K562 (cell line): ENCODE measurements at regions of chr4 and their contacts with region 1.

Region 1: DNA sequence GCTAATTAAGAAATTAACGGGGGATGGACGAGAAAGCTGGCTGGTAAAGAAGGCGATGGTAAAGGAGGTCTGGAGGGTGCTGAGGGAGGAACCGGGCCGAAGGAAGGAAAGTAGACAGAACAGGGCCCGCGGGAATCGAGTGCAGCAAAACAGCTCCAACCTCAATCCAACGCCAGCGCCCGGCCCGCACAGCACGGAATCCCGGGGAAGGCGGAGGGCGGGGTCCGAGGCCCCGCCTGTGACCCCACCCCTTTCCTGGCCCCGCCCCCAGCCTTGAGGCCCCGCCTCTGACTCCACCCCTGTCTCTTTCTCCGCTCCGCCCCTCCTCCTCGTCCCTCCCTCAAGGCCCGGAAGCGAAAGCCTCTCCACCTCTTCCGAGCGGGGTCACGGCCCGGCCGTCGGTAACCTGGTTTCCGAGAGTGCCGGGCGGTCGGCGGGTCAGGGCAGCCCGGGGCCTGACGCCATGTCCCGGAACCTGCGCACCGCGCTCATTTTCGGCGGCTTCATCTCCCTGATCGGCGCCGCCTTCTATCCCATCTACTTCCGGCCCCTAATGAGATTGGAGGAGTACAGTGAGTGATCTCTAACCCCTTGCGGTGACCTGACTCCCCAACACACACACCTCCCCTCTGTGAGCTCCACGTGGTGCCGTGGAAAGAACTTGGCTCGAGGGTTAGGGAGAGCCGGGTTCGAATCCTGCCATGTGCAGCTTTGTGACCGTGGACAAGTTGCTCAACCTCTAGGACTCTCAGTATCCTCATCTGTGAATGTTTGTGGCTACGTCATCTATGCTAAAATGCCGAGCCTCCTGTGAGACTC is at the start of gene SMIM20:
- DNase-seq: peak; percentile 92 to 96 (median 95)
- ATAC-seq: peak; percentile 97
- H3K4me3 ChIP-seq: peak within 1 kb of the TSS; percentile 47
- H3K27ac ChIP-seq: peak within 1 kb of the TSS; percentile 94
- H3K4me1 ChIP-seq: peaks cover 13 to 16% of the 10 kb centered on the region in 2 experiments; a peak in 4 of 5 replicates
- H3K27me3 ChIP-seq: peaks cover 22 to 23% of the 10 kb centered on the region in 2 experiments; a peak in 3 of 5 replicates
- CTCF ChIP-seq: no peak
- EP300 ChIP-seq: peak; percentile 7; the same call in 1 of the 2 replicates
- POLR2A ChIP-seq: peak; percentile 86
- RAD21 ChIP-seq: no peak
- polyA plus RNA-seq, gene SMIM20: 50.7 to 51.0 TPM

Region 2: GRCh38 chr4:25792200-25792791 is 121.8 kb before region 1 on chr4:
- CTCF ChIA-PET with region 1: no interaction called
- POLR2A ChIA-PET with region 1: no interaction called
- in situ Hi-C with region 1: no loop called
- intact Hi-C with region 1: no loop called
- DNase-seq: peak; percentile 30 to 61 (median 42)
- ATAC-seq: peak; percentile 91
- H3K4me3 ChIP-seq: no peak overlapping the region
- H3K27ac ChIP-seq: no peak overlapping the region
- H3K4me1 ChIP-seq: no peaks in the 10 kb centered on the region
- H3K27me3 ChIP-seq: no peaks in the 10 kb centered on the region
- CTCF ChIP-seq: peak; percentile 67 to 75 (median 72)
- EP300 ChIP-seq: no peak
- POLR2A ChIP-seq: no peak
- RAD21 ChIP-seq: peak; percentile 33 to 46

Region 3: DNA sequence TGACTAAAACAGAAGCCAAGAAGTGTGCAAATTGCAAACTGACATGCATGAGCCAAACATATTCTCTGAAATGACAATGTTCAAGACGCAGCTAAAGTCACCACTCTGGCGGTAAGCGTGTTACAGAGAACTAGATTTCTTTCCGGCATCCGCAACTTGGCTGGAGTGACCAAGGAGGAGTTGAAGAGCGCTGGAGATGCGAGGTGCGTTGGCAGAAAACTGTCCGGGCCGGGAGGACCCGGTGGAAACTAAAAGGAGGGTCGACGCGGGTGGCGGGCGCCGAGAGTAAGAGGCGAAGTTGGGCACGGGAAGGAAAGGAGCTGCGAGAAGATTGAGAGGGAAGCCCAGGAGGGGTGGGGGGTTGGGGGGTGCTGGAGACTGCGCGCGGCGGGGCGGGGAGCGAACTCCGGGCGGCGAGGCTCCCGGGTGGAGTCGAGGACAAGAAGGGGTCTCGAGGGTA is 52.1 kb before region 1 on chr4:
- CTCF ChIA-PET with region 1: no interaction called
- POLR2A ChIA-PET with region 1: interaction called, 3 read pairs
- in situ Hi-C with region 1: no loop called
- intact Hi-C with region 1: loop called (anchors 1 kb)
- DNase-seq: peak in 1 of 4 experiments; percentile 59
- ATAC-seq: peak; percentile 46
- H3K4me3 ChIP-seq: peak overlapping the region; percentile 78
- H3K27ac ChIP-seq: peak overlapping the region; percentile 77
- H3K4me1 ChIP-seq: peaks cover 16 to 27% of the 10 kb centered on the region in 2 experiments; a peak in 4 of 5 replicates
- H3K27me3 ChIP-seq: peaks cover 2 to 3% of the 10 kb centered on the region in 2 experiments; a peak in 1 of 5 replicates
- CTCF ChIP-seq: no peak
- EP300 ChIP-seq: no peak
- POLR2A ChIP-seq: peak; percentile 42; the same call in 1 of the 2 replicates
- RAD21 ChIP-seq: no peak